ENCODE measurements at regions of chr13 and their contacts with region 1.

Region 1: DNA sequence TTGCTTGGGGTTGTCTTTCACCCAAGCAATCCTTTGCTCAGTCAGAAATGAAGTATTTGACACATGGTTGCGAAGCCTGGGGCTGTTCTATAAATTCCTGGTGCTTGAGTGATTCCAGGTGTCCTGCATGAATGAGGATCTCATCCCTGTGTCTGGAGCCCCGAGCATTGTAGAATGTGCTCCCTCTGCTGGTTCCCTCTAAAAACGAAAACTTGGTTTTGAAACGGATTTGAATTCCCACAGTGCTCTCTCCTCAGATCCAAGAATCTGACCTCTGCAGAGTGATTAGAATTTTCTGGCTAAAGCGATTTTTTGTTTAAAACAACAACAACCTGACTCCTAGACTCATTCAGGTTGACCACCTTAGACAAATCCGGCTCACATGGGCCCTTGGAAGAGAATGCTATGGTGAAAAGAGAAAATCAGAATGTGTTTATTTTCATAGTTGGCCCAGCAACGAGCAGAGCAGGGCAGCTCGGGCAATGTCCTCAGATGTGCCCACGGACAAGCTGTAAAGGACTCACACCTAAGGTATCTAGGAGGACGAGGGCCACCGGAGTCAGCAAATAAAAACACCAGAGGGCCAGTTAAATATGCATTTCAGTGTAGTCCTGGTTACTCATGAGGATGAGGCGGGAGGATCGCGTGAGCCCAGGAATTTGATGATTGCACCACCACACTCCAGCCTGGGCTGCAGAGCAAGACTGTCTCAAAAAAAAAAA is 8.7 kb upstream of the ATP12A start:
- DNase-seq: peak; percentile 72
- ATAC-seq: peak; percentile 92
- H3K4me3 ChIP-seq: no peak overlapping the region
- H3K27ac ChIP-seq: peak overlapping the region; percentile 4; the same call in 1 of the 2 replicates
- H3K4me1 ChIP-seq: no peaks in the 10 kb centered on the region
- H3K27me3 ChIP-seq: peaks cover 17% of the 10 kb centered on the region
- CTCF ChIP-seq: peak; percentile 70
- POLR2A ChIP-seq: no peak
- RAD21 ChIP-seq: peak; percentile 47

Region 2: GRCh38 chr13:24574847-24575246 is 96.7 kb before region 1 on chr13:
- CTCF ChIA-PET with region 1: interaction called, 3 read pairs
- POLR2A ChIA-PET with region 1: no interaction called
- dilution Hi-C with region 1: no loop called
- in situ Hi-C with region 1: no loop called
- intact Hi-C with region 1: loop called (anchors 1 kb)
- DNase-seq: no peak
- ATAC-seq: no peak
- H3K4me3 ChIP-seq: no peak overlapping the region
- H3K27ac ChIP-seq: no peak overlapping the region
- H3K4me1 ChIP-seq: no peaks in the 10 kb centered on the region
- H3K27me3 ChIP-seq: no peaks in the 10 kb centered on the region
- CTCF ChIP-seq: no peak
- POLR2A ChIP-seq: no peak
- RAD21 ChIP-seq: no peak

Measured in IMR-90 (cell line).